Natural killer cell (primary cell): ENCODE measurements at regions of chr7 and their contacts with region 1.

Region 1: DNA sequence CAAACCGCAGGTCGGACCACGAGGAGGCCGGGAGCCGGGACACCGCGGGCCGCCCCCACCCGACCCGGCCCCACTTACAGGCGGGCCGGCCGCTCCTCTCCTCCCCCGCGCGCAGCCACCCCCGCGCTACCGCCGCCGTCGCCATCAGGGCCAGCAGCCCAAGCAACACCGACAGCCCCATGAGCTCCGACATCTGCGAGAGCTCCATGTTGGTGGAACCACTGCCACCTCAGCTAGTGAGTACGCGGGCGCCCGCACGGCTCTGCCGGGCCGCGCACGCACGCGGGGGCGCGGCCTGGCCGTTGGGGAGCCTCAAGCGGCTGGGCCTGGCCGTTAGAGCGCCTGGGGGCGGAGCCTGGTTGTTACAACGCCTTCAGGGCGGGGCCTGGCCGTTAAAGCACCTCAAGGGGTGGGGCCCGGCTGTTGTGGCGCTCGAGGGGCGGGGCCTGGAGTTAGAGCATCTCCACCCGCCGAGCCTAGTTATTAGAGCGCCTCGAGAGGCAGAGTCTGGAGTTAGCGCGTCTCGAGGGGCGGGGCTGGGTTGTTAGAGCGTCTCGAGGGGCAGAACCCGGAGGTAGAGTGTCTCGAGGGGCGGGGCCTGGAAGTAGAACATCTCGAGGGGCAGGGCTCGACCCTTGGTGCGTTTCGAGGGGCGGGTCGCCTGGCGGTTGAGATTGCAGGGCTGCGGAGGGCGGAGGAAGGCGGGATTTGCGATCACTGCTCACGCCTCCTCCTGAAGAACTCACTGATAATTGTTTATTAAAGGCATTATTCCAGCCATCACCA is at the start of gene TBL2:
- DNase-seq: peak; percentile 99
- ATAC-seq: peak; percentile 87 to 96 (median 89)
- H3K4me3 ChIP-seq: peak within 1 kb of the TSS; percentile 92
- H3K4me3 Mint-ChIP-seq: peak within 1 kb of the TSS; percentile 100
- H3K27ac ChIP-seq: peak within 1 kb of the TSS; percentile 74
- H3K27ac Mint-ChIP-seq: peak within 1 kb of the TSS; percentile 96 to 100
- H3K4me1 ChIP-seq: peaks cover 19% of the 10 kb centered on the region
- H3K4me1 Mint-ChIP-seq: peaks cover 11 to 31% of the 10 kb centered on the region in 2 donors
- H3K27me3 ChIP-seq: no peaks in the 10 kb centered on the region
- H3K27me3 Mint-ChIP-seq: no peaks in the 10 kb centered on the region
- CTCF ChIP-seq: no peak
- total RNA-seq, gene TBL2: 15.1 to 18.5 (median 17.6) TPM

Region 2: GRCh38 chr7:73557108-73557396 is 21.5 kb before region 1 on chr7:
- intact Hi-C with region 1: loop called (anchors 1 kb)
- DNase-seq: peak; percentile 90 to 96
- ATAC-seq: peak; percentile 86 to 96 (median 89)
- H3K4me3 ChIP-seq: peak overlapping the region; percentile 74
- H3K4me3 Mint-ChIP-seq: peak overlapping the region; percentile 93
- H3K27ac ChIP-seq: peak overlapping the region; percentile 99
- H3K27ac Mint-ChIP-seq: peak overlapping the region; percentile 94 to 96
- H3K4me1 ChIP-seq: peaks cover 26% of the 10 kb centered on the region
- H3K4me1 Mint-ChIP-seq: peaks cover 34 to 42% of the 10 kb centered on the region in 2 donors
- H3K27me3 ChIP-seq: no peaks in the 10 kb centered on the region
- H3K27me3 Mint-ChIP-seq: peaks cover 0 to 2% of the 10 kb centered on the region in 2 donors
- CTCF ChIP-seq: no peak